PC-3 (cell line): ENCODE measurements at regions of chr2 and their contacts with region 1.

Region 1: GRCh38 chr2:189866296-189866695 is 82.0 kb downstream of the PMS1 start:
- DNase-seq: no peak
- ATAC-seq: no peak
- H3K4me3 ChIP-seq: no peak overlapping the region
- H3K27ac ChIP-seq: no peak overlapping the region
- H3K4me1 ChIP-seq: no peaks in the 10 kb centered on the region
- H3K27me3 ChIP-seq: no peaks in the 10 kb centered on the region
- CTCF ChIP-seq: no peak

Region 2: DNA sequence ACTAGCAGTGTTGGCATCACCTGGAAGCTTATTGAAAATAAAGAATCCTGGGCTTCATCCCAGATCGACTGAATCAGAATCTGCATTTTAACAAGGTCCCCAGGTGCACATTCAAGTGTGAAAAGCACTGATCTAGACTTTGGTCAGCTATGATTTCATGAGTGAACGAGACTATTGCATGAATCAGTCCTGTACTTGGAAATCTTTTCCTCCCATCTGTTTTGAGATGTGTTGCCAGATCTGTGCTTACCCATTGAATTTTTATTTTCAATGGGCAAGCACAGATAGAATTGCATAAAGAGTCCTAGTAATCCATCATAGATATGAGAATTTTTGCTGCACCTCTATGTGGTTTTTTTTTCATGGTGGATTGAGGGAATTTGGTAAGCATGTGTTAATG is 18.0 kb before region 1 on chr2:
- CTCF ChIA-PET with region 1: no interaction called
- POLR2A ChIA-PET with region 1: no interaction called
- intact Hi-C with region 1: no loop called
- DNase-seq: no peak
- ATAC-seq: no peak
- H3K4me3 ChIP-seq: no peak overlapping the region
- H3K27ac ChIP-seq: no peak overlapping the region
- H3K4me1 ChIP-seq: peaks cover 9% of the 10 kb centered on the region
- H3K27me3 ChIP-seq: no peaks in the 10 kb centered on the region
- CTCF ChIP-seq: no peak

Region 3: DNA sequence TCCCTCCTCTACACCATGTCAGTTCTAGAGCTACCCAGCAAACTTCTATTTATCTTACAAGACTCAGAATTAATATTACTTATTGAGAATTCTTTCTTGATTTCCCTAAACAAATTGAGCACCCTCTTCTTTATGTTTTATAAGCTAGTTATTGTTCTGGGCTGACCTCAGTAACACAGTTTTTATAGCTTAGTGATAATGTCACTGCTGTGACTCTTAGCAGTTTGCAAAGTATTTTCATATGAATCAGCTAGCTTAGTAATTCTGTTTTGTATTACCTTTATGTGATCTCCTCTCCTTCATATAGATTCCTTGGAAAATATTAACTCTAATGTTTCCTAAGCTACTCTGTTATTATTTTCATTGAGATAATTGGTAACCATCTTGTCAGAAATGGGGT is 32.8 kb after region 1 on chr2:
- CTCF ChIA-PET with region 1: no interaction called
- POLR2A ChIA-PET with region 1: interaction called, 13 read pairs
- intact Hi-C with region 1: no loop called
- DNase-seq: peak; percentile 52
- ATAC-seq: peak; percentile 74
- H3K4me3 ChIP-seq: no peak overlapping the region
- H3K27ac ChIP-seq: no peak overlapping the region
- H3K4me1 ChIP-seq: peaks cover 17% of the 10 kb centered on the region; the same call in 1 of the 2 replicates
- H3K27me3 ChIP-seq: no peaks in the 10 kb centered on the region
- CTCF ChIP-seq: no peak